H1 (cell line): ENCODE measurements at regions of chr11 and their contacts with region 1.

Region 1: GRCh38 chr11:96342961-96343711 is at the start of gene MAML2:
- DNase-seq: peak; percentile 81 to 84
- H3K4me3 ChIP-seq: peak within 1 kb of the TSS; percentile 48 to 95 (median 70)
- H3K27ac ChIP-seq: no peak within 1 kb of the TSS
- H3K4me1 ChIP-seq: peaks cover 0 to 19% (median 6%) of the 10 kb centered on the region in 4 experiments; a peak in 6 of 7 replicates
- H3K27me3 ChIP-seq: peaks cover 0 to 3% (median 0%) of the 10 kb centered on the region in 4 experiments; a peak in 1 of 7 replicates
- CTCF ChIP-seq: peak; percentile 89 to 98 (median 95)
- EP300 ChIP-seq: peak in 1 of 2 experiments; percentile 5; a peak in 1 of 3 replicates
- POLR2A ChIP-seq: no peak
- RAD21 ChIP-seq: peak; percentile 87 to 93
- total RNA-seq, gene MAML2: 6.6 and 6.8 TPM in 2 replicates

Region 2: DNA sequence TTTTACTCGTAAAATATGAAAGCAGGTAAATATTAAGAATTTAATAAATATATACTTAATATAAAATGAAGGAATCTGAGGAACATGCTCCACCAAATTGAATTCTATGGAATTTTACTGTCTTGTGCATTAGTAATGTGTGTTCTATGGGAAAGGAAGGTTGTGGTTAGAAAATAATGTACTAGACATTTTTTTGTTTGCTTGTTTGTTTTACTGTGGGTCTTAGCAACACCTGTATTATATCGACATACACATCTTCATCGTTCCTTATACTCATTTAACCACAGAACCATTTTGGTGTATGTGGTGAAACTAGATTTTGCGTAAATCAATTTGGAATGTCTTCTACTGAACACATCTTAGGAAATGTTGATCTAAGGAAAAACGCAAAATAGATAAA is 305.1 kb before region 1 on chr11:
- CTCF ChIA-PET with region 1: interaction called, 13 read pairs
- POLR2A ChIA-PET with region 1: no interaction called
- DNase-seq: no peak
- H3K4me3 ChIP-seq: no peak overlapping the region
- H3K27ac ChIP-seq: no peak overlapping the region
- H3K4me1 ChIP-seq: peaks cover 0 to 2% (median 0%) of the 10 kb centered on the region in 4 experiments; a peak in 1 of 7 replicates
- H3K27me3 ChIP-seq: no peaks in the 10 kb centered on the region
- CTCF ChIP-seq: no peak
- EP300 ChIP-seq: no peak
- POLR2A ChIP-seq: no peak
- RAD21 ChIP-seq: no peak

Region 3: DNA sequence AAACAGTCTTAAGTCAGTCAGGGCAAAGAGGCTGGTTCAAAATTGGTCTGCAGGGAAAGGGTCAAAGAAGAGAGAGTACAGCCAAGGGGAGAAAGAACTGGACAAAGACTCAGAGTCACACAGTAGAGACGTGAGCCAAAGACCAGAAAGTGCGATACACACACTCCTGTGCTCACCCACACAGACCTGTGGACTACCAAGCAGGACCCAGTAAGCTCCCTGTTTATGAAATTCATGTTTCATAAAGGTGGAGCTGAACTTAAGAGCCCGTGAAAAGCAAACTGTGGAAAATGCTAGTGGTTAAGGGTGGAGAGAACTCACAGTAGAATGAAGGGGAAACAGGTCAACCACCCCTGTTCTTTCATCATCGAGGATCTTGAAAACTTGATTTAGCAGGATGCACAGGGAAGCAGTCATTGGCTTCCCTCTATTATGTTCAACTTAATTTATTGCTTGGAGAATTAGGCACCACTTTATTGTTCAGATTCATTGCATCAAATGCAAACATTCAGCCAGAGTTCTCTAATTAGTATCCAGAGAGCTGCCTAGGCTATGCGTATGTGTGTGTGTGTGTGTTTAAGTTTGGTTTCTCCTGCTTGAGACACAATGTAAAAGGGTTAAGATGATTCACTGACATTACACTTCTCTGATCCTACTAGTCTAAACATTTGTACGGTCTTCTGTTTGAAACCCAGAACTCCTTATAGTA is 258.4 kb before region 1 on chr11:
- CTCF ChIA-PET with region 1: interaction called, 15 read pairs
- POLR2A ChIA-PET with region 1: no interaction called
- DNase-seq: no peak
- H3K4me3 ChIP-seq: no peak overlapping the region
- H3K27ac ChIP-seq: no peak overlapping the region
- H3K4me1 ChIP-seq: peaks cover 3 to 20% (median 11%) of the 10 kb centered on the region in 4 experiments; a peak in 5 of 7 replicates
- H3K27me3 ChIP-seq: no peaks in the 10 kb centered on the region
- CTCF ChIP-seq: no peak
- EP300 ChIP-seq: no peak
- POLR2A ChIP-seq: no peak
- RAD21 ChIP-seq: no peak

Region 4: GRCh38 chr11:96237766-96238266 is 105.3 kb before region 1 on chr11:
- CTCF ChIA-PET with region 1: interaction called, 21 read pairs
- POLR2A ChIA-PET with region 1: interaction called, 5 read pairs
- DNase-seq: no peak
- H3K4me3 ChIP-seq: no peak overlapping the region
- H3K27ac ChIP-seq: no peak overlapping the region
- H3K4me1 ChIP-seq: peaks cover 0 to 8% (median 5%) of the 10 kb centered on the region in 4 experiments; a peak in 4 of 7 replicates
- H3K27me3 ChIP-seq: no peaks in the 10 kb centered on the region
- CTCF ChIP-seq: no peak
- EP300 ChIP-seq: no peak
- POLR2A ChIP-seq: no peak
- RAD21 ChIP-seq: no peak

Region 5: GRCh38 chr11:96279018-96279895 is 63.9 kb before region 1 on chr11:
- CTCF ChIA-PET with region 1: interaction called, 15 read pairs
- POLR2A ChIA-PET with region 1: no interaction called
- DNase-seq: no peak
- H3K4me3 ChIP-seq: no peak overlapping the region
- H3K27ac ChIP-seq: no peak overlapping the region
- H3K4me1 ChIP-seq: peaks cover 2 to 18% (median 4%) of the 10 kb centered on the region in 4 experiments; a peak in 5 of 7 replicates
- H3K27me3 ChIP-seq: no peaks in the 10 kb centered on the region
- CTCF ChIP-seq: no peak
- EP300 ChIP-seq: no peak
- POLR2A ChIP-seq: no peak
- RAD21 ChIP-seq: no peak